A673 (cell line): ENCODE measurements at regions of chr13 and their contacts with region 1.

Region 1: GRCh38 chr13:111210544-111211469 is 95.7 kb downstream of the ARHGEF7 start:
- DNase-seq: peak; percentile 86
- H3K4me3 ChIP-seq: no peak overlapping the region
- H3K27ac ChIP-seq: peak overlapping the region; percentile 18
- H3K4me1 ChIP-seq: peaks cover 26% of the 10 kb centered on the region
- H3K27me3 ChIP-seq: no peaks in the 10 kb centered on the region
- CTCF ChIP-seq: no peak

Region 2: DNA sequence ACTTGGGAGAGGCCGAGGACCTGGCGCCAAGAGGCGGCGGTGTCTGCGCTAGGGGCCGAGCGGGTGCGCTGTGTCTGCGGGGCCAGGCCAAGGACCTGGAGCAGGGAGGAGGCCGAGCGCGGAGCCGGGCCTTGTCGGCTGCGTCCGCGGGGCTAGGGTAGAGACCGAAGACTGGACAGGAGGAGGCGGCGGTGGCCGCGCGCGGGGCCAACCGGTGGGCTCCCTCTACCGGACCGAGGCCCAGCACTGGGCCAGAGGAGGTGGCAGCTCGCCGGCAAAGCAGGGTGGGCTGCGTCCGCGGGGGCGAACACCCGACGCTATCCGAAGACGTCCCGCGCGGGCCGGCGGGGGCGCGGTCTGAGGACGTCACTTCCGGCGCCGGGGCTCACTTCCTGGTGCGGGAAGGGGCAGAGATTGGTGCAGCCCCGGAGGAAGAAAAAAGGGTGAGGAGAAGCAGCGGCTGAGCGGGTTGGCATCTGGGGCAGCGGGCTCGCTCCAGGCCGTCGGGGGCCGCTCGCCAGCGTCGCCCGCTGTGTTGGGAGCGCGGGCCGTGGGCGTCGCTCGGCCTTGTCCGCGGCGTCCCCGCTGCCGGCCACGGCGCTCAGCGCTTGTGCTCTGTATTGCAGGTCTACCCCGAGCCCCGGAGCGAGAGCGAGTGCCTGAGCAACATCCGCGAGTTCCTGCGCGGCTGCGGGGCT is 57.4 kb before region 1 on chr13:
- CTCF ChIA-PET with region 1: no interaction called
- POLR2A ChIA-PET with region 1: interaction called, 4 read pairs
- intact Hi-C with region 1: loop called (anchors 5 kb)
- DNase-seq: peak; percentile 94
- H3K4me3 ChIP-seq: peak overlapping the region; percentile 77
- H3K27ac ChIP-seq: peak overlapping the region; percentile 90
- H3K4me1 ChIP-seq: no peaks in the 10 kb centered on the region
- H3K27me3 ChIP-seq: peaks cover 32% of the 10 kb centered on the region
- CTCF ChIP-seq: no peak